ENCODE measurements at regions of chr12 and their contacts with region 1.

Region 1: DNA sequence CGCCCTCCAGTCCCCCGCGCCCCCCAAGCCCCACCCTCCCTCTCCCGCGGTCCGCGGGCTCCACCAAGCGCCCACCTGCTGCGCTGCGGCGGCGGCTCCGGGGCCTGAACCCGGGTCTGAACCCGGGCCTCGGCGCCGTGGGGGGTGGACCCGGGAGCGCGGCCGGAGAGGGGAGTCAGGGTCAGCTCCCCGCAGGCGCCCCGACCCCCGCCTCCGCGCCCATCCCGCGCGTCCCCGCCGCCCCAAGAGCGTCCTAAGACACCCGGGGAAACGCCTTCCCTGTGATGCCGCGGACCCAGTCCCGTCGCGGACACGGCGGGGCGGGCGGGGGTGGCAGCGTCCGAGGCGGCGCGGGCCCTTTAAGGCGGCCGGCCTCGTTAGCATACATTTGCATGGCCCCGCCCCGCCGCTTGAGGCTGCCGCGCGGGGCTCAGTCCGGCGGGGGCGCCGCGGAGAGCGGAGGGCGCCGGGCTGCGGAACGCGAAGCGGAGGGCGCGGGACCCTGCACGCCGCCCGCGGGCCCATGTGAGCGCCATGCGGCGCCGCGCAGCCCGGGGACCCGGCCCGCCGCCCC is at the start of gene MMP17:
- DNase-seq: peak in 39 of 42 donors; percentile 42 to 84 (median 65)

Region 2: DNA sequence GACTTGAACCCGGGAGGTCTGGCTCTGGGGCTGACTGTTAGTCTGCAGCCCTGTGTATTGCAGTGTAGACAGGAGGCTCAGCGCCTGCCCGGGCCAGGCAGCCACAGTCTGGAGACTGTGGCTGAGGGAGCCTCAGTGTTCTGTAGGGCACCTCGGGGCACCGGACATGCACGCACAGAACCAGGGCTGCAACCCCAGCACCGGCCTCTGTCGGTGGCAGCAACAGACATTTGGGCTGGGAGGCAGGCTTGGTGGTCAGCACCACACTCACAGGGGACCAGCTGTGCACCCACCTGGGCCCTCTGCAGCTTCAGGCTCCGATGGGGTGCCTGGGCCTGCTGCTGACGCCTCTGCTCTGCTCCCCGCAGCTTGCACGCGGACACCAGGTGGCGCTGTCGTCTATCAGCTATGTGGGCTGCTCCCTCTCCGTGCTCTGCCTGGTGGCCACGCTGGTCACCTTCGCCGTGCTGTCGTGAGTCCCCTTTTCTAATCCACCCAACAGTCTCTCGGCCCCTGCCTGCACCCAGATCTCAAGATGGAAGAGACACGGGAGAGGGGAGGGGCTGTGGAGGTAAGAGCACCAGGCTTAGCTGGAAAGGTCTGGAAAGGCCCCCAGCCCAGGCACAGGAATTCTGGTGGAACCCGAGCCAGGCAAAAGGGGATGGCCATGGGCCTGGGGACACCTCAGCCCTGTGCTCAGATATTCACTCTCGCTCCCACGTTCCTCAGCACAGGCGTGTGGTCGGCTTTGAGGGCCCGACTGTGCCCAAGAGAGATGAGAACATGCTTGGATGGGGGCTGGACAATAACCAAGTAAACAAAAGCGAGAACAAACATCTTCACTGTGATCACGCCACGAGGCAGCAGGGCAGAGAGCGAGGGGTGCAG is 723.3 kb before region 1 on chr12:
- intact Hi-C with region 1: loop called (anchors 5 kb)
- DNase-seq: peak; percentile 80 to 97 (median 92)

Region 3: GRCh38 chr12:131487388-131488124 is 340.5 kb before region 1 on chr12:
- intact Hi-C with region 1: no loop called
- DNase-seq: peak in 20 of 42 donors; percentile 4 to 81 (median 34)

Region 4: DNA sequence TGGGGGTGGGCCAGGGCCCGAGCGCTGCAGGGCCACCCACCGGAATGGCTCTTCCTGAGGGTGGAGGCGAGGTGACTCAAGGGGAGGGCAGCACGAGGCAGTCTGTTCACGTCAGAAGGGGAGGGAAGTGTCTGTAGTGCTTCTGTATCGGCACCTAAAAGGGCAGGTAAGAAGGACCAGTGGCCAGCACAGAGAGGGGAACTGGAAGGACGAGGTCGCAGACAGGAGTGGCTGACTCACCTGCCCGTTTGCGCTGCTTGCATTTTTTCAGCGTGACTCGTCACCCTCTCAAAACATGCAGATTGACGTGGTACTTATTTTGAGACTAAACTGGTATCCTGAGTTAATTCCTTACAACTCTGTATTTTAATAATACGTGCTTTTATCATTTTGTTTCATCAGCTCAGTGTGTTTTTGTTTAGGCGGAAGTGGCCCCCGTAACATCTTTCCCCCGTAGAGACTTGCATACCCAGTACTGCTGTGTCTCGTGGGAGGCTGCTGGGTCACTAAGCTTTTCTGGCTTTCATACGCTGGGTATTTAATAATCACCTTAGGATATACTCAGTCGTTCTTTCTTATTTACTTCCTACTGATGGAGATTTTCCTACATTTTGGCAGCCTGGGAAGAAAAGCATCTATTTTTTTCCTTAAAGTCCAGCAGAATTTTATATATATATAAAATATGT is 90.8 kb before region 1 on chr12:
- intact Hi-C with region 1: loop called (anchors 10 kb)
- DNase-seq: peak in 1 of 42 donors; percentile 43

Region 5: GRCh38 chr12:131940141-131940557 is 112.1 kb after region 1 on chr12:
- intact Hi-C with region 1: no loop called
- DNase-seq: peak in 6 of 42 donors; percentile 3 to 73 (median 34)

Measured in head of caudate nucleus (tissue), 42 donors.